K562 (cell line): ENCODE measurements at regions of chr3 and their contacts with region 1.

Region 1: DNA sequence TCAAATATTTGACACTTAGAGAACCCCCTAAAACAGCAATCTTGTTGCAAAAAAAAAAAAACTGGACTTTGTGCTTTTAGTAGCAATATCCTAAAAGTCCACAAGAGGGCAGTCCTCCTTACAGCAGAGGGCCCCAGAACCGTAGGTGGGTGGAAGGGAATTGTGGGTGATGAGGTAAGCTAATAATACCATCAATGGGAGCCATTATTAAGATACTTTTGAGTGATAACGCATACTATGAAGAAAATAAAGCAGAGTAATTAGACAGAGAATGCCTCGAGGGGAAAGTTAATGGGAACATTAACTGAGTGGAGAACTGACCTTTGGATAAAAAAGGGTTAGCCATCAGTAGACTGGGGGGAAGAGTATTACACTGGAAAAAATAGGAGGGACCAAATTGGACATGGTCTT is 229.9 kb downstream of the THRB start:
- DNase-seq: peak; percentile 74 to 83 (median 78)
- ATAC-seq: peak; percentile 52
- H3K4me3 ChIP-seq: no peak overlapping the region
- H3K27ac ChIP-seq: no peak overlapping the region
- H3K4me1 ChIP-seq: peaks cover 9 to 24% of the 10 kb centered on the region in 2 experiments; a peak in 4 of 5 replicates
- H3K27me3 ChIP-seq: no peaks in the 10 kb centered on the region
- CTCF ChIP-seq: peak; percentile 71 to 87 (median 85)
- EP300 ChIP-seq: no peak
- POLR2A ChIP-seq: no peak
- RAD21 ChIP-seq: peak; percentile 73 to 82

Region 2: DNA sequence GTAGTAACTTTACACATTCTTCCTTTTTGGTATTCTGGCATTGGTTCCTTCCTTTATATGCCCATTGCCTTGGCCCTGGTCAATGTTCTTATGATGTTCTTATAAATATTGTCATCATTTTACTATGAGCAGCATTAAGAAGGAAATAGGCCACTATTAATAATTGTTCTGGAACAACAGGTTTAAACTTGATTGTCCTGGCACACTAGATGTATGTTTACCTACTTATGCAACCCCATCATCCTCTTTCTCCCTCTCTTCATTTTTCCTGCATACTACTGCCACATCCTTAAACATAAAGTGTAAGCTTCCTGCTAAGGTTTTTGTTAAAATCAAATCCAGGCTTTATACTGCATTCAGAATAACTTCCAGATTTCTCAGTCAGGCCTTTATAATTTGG is 115.2 kb after region 1 on chr3:
- CTCF ChIA-PET with region 1: no interaction called
- POLR2A ChIA-PET with region 1: no interaction called
- in situ Hi-C with region 1: no loop called
- intact Hi-C with region 1: no loop called
- DNase-seq: no peak
- ATAC-seq: no peak
- H3K4me3 ChIP-seq: no peak overlapping the region
- H3K27ac ChIP-seq: no peak overlapping the region
- H3K4me1 ChIP-seq: peaks cover 3 to 37% of the 10 kb centered on the region in 2 experiments; a peak in 3 of 5 replicates
- H3K27me3 ChIP-seq: no peaks in the 10 kb centered on the region
- CTCF ChIP-seq: no peak
- EP300 ChIP-seq: no peak
- POLR2A ChIP-seq: no peak
- RAD21 ChIP-seq: no peak

Region 3: GRCh38 chr3:24582431-24583403 is 318.0 kb after region 1 on chr3:
- CTCF ChIA-PET with region 1: no interaction called
- POLR2A ChIA-PET with region 1: no interaction called
- in situ Hi-C with region 1: no loop called
- intact Hi-C with region 1: loop called (anchors 1 kb)
- DNase-seq: peak in 2 of 4 experiments; percentile 33 to 41
- ATAC-seq: peak; percentile 68
- H3K4me3 ChIP-seq: no peak overlapping the region
- H3K27ac ChIP-seq: no peak overlapping the region
- H3K4me1 ChIP-seq: peaks cover 6 to 7% of the 10 kb centered on the region in 2 experiments; a peak in 4 of 5 replicates
- H3K27me3 ChIP-seq: no peaks in the 10 kb centered on the region
- CTCF ChIP-seq: peak; percentile 40 to 59 (median 51); a peak in 5 of 6 replicates
- EP300 ChIP-seq: no peak
- POLR2A ChIP-seq: no peak
- RAD21 ChIP-seq: peak; percentile 49 to 71